Activated B cell treated with CpG ODN at 0.5 μM for 24 hours (primary cell): ENCODE measurements at regions of chr3 and their contacts with region 1.

Region 1: DNA sequence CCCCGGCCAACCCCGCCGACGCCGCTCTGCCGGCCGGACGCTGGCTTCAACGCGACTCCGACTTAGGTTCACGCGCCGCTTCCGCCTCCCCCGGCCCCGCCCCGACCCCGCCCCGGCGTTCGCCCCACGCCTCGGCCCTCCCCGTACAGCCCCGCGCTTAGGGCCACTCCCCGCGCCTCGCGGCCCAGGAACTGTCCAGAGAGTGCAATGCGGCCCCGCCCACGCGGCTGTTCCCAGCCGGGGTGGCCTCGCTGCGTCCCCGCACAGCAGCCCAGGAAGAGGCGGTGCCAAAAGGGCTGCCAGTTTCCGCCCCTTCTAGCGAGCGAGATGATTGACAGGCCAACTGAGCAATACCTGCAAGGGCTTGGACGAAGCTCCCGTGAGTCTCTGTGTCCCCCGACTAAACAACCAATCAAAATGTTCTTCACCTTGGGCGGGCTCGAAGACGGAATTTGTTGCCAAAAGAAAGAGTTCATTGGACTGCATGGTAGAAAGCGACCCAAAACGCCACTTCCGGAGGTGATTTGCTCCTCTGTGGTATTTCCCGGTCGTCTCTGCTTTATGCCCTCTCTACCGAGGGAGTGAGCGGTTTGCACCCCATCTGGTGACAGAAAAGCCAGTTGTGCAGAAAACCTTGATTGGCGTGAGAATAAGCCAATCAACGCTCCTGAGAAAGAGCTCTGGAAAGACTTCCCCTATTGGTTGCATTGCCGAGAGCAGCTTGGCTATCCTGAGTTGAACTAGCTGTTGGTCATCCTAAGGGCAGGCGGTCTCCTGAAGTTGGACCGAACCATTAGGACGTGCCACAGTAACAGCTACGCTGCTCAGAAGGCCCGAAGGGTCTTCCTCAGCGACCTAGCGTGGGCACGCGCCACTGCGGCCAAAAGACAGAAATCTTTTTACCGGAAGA is at the start of gene UBP1:
- DNase-seq: peak; percentile 95
- ATAC-seq: peak; percentile 84
- H3K4me3 Mint-ChIP-seq: peak within 1 kb of the TSS; percentile 100
- H3K27ac Mint-ChIP-seq: peak within 1 kb of the TSS; percentile 100
- H3K4me1 Mint-ChIP-seq: peaks cover 48% of the 10 kb centered on the region
- H3K27me3 Mint-ChIP-seq: no peaks in the 10 kb centered on the region
- CTCF ChIP-seq: no peak
- total RNA-seq, gene UBP1: 50.1 and 68.6 TPM in 2 replicates

Region 2: DNA sequence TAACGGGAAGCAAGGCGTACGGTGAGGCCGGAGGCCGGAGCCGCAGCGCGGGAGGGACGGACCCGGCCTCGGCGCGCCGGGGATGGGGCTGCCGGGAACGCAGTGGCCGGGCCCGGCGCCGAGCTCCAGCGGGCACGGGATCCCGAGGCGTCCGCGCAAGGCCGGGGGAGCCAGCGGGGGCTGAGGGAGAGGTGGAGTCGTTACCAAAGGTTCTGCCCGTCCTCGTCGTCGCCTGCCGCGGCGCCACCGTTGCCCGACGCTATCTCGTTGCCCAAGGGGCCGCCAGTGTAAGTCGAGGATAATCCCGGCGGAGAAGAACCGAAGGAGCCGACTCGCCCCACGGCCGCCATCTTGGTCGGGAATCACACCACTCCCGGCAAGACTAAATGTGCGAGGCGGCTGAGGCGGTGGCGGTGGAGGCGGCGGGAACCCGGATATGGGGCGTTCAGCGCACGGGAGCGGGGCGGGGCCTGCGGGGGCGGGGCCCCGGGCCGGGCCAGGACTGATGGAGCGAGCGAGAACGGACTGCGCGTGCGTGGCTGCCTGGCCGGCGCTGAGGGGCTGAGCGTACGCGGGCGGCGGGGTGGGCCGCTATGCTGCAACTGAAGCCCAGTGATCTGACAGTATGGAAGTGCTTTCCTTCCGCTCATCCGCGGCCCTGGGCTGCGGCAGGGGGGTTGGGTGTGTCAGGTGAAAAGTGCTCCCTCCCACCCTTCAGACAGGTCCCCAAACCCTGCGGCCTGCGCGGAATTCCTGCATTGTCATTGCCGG is 870.0 kb before region 1 on chr3 and contains the start of gene DYNC1LI1:
- CTCF ChIA-PET with region 1: no interaction called
- POLR2A ChIA-PET with region 1: no interaction called
- intact Hi-C with region 1: loop called (anchors 10 kb)
- DNase-seq: peak; percentile 96
- ATAC-seq: peak; percentile 95
- H3K4me3 Mint-ChIP-seq: peak within 1 kb of the TSS; percentile 94
- H3K27ac Mint-ChIP-seq: peak within 1 kb of the TSS; percentile 93
- H3K4me1 Mint-ChIP-seq: peaks cover 32% of the 10 kb centered on the region
- H3K27me3 Mint-ChIP-seq: no peaks in the 10 kb centered on the region
- CTCF ChIP-seq: no peak
- total RNA-seq, gene DYNC1LI1: 32.6 and 38.8 TPM in 2 replicates

Region 3: DNA sequence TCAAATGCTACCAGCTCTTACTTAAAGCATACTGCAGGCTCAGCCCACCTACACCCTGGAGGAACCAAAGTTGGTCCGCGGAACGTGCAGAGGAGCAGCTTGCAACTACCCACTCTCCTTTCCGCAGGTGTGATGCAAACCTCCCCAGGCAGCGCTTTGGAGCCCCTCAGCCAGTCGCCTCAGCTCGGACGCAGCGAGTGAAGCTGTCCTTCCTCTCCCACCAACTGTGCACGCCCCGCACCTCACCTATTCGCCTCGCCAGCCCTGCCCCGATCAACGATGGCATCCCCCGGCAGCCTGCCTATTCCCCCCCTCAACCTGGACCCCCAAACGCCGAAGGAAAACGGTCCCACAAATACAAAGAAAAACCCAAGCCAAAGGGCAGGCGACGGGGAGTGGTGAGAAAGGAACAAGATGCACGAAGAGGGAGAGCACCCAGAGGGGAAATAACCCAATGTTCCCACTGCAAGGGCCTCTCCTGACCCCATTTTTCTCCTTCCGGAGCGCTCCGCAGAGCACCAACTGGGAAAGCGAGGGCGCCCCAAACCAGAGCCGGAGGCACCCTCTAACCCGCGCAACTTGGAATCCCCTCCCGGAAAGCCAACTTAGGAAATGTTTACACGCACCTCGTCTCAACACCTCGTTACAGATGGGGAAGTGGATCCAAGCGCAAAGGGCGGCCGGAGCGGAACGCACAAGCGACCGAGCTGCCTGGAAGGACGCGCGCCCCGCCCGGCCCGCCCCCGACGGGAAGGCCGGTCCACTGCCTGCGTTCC is 344.3 kb before region 1 on chr3:
- CTCF ChIA-PET with region 1: no interaction called
- POLR2A ChIA-PET with region 1: interaction called, 4 read pairs
- intact Hi-C with region 1: loop called (anchors 1 kb)
- DNase-seq: peak; percentile 58
- ATAC-seq: peak; percentile 68
- H3K4me3 Mint-ChIP-seq: peak overlapping the region; percentile 98
- H3K27ac Mint-ChIP-seq: peak overlapping the region; percentile 94
- H3K4me1 Mint-ChIP-seq: peaks cover 41% of the 10 kb centered on the region
- H3K27me3 Mint-ChIP-seq: no peaks in the 10 kb centered on the region
- CTCF ChIP-seq: no peak

Region 4: GRCh38 chr3:33144433-33144832 is 296.1 kb before region 1 on chr3:
- CTCF ChIA-PET with region 1: no interaction called
- POLR2A ChIA-PET with region 1: no interaction called
- intact Hi-C with region 1: no loop called
- DNase-seq: no peak
- ATAC-seq: no peak
- H3K4me3 Mint-ChIP-seq: no peak overlapping the region
- H3K27ac Mint-ChIP-seq: no peak overlapping the region
- H3K4me1 Mint-ChIP-seq: peaks cover 9% of the 10 kb centered on the region
- H3K27me3 Mint-ChIP-seq: no peaks in the 10 kb centered on the region
- CTCF ChIP-seq: no peak

Region 5: GRCh38 chr3:33420966-33421365 is 19.6 kb before region 1 on chr3:
- CTCF ChIA-PET with region 1: no interaction called
- POLR2A ChIA-PET with region 1: interaction called, 11 read pairs
- intact Hi-C with region 1: loop called (anchors 1 kb)
- DNase-seq: no peak
- ATAC-seq: no peak
- H3K4me3 Mint-ChIP-seq: no peak overlapping the region
- H3K27ac Mint-ChIP-seq: peak overlapping the region; percentile 56
- H3K4me1 Mint-ChIP-seq: peaks cover 13% of the 10 kb centered on the region
- H3K27me3 Mint-ChIP-seq: no peaks in the 10 kb centered on the region
- CTCF ChIP-seq: no peak

Region 6: GRCh38 chr3:33482111-33482521 is 41.5 kb after region 1 on chr3:
- CTCF ChIA-PET with region 1: no interaction called
- POLR2A ChIA-PET with region 1: no interaction called
- intact Hi-C with region 1: no loop called
- DNase-seq: no peak
- ATAC-seq: no peak
- H3K4me3 Mint-ChIP-seq: no peak overlapping the region
- H3K27ac Mint-ChIP-seq: no peak overlapping the region
- H3K4me1 Mint-ChIP-seq: no peaks in the 10 kb centered on the region
- H3K27me3 Mint-ChIP-seq: no peaks in the 10 kb centered on the region
- CTCF ChIP-seq: no peak

Region 7: GRCh38 chr3:33578325-33579177 is 138.0 kb after region 1 on chr3:
- CTCF ChIA-PET with region 1: no interaction called
- POLR2A ChIA-PET with region 1: no interaction called
- intact Hi-C with region 1: loop called (anchors 5 kb)
- DNase-seq: no peak
- ATAC-seq: no peak
- H3K4me3 Mint-ChIP-seq: no peak overlapping the region
- H3K27ac Mint-ChIP-seq: no peak overlapping the region
- H3K4me1 Mint-ChIP-seq: peaks cover 6% of the 10 kb centered on the region
- H3K27me3 Mint-ChIP-seq: no peaks in the 10 kb centered on the region
- CTCF ChIP-seq: no peak

Region 8: DNA sequence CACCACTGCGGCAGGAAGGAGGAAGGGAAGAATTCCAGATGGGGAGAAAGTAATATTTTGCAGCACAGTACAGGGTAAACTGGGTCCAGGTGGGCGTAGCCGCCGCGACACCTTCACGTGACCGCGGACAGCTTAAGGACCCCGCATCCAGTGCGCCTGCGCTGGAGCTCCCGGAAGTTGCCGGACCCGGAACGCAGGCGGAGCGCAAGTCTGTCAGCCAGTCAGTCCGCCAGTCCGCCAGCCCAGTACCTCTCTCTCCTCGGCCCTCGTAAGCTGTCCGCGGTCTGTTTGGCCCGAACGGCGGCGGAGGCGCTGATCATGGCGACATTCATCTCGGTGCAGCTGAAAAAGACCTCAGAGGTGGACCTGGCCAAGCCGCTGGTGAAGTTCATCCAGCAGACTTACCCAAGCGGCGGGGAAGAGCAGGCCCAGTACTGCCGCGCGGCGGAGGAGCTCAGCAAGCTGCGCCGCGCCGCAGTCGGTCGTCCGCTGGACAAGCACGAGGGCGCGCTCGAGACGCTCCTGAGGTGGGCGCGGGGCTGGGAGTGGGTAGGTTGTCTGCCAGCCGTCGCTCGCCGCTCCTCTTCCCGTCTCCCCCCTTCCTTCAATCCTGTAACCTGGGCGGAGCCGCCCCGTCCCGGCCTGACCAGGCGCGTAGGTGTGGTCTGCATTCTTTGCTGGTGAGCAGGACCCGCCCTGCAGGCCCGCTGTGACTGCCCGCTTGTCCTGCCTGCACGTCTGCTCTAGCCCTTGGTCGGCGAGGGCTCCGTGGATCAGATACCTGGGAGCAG is 358.0 kb after region 1 on chr3 and contains the start of gene PDCD6IP:
- CTCF ChIA-PET with region 1: no interaction called
- POLR2A ChIA-PET with region 1: interaction called, 30 read pairs
- intact Hi-C with region 1: loop called (anchors 1 kb)
- DNase-seq: peak; percentile 93
- ATAC-seq: peak; percentile 84
- H3K4me3 Mint-ChIP-seq: peak within 1 kb of the TSS; percentile 99
- H3K27ac Mint-ChIP-seq: peak within 1 kb of the TSS; percentile 95
- H3K4me1 Mint-ChIP-seq: peaks cover 52% of the 10 kb centered on the region
- H3K27me3 Mint-ChIP-seq: no peaks in the 10 kb centered on the region
- CTCF ChIP-seq: no peak
- total RNA-seq, gene PDCD6IP: 216 and 237 TPM in 2 replicates

Region 9: DNA sequence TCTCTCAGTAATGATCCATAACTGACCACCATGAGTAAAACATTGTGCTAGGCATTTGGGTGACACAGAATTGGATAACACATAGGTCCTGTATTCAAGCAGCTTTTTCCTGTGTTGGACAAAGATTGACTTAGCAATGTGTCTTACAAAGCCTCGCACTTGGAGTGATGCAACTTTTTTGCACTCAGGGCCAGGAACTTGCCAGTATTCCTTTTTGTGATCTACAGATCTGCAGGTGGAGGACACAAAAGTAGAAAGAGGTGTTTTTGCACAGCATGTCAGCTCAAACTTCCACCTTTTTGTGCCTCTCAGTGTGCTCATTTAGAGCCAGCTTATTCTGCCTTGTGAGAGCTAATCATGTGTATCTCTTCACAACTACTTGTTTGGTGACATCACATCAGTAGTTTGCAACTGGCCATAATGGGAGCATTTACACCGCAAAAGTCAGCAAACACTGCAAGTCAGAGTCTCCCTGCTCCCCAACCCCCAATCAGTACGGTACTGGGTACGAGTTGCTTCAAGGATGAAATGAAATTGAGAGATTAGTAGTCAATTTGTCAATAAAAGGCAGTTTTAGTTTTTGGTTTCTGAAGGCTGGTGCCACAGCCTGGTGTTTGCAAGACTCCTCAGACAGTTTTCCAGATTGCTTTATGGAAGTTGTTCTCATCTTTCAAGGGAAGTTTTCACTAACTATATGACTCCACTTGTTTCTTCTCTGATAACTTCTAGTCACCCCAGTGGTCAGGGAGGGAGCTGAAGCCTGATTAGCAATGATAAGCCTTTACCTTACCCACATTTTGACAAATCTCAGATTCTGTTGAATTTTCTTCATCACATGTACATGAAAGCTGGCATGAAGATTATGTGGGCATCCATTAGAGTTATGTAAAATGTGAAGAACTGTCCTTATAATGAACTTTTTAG is 507.0 kb after region 1 on chr3:
- CTCF ChIA-PET with region 1: no interaction called
- POLR2A ChIA-PET with region 1: no interaction called
- intact Hi-C with region 1: no loop called
- DNase-seq: no peak
- ATAC-seq: no peak
- H3K4me3 Mint-ChIP-seq: no peak overlapping the region
- H3K27ac Mint-ChIP-seq: no peak overlapping the region
- H3K4me1 Mint-ChIP-seq: no peaks in the 10 kb centered on the region
- H3K27me3 Mint-ChIP-seq: no peaks in the 10 kb centered on the region
- CTCF ChIP-seq: no peak